GM13976 (cell line): ENCODE measurements at regions of chr22 and their contacts with region 1.

Region 1: DNA sequence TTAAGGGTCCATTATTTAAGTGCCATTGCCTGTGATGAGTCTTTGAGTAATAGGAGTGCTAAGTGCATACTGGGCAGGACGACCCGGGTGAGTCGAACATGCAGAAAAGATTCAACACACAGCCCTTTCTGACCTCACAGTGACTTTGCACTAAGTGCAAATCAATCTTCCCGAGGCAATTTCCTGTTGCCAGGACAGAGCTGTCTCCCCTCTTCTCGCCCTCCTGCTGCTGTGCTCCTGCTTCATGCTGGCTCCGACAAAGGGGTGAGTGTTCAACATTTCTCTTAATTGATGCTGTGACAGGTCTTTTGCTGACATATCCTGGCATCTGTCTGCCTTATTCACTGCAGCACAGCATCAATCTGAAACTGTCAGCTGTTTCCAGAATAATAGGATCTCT is 42.0 kb downstream of the MCHR1 start:
- DNase-seq: no peak
- CTCF ChIP-seq: no peak

Region 2: GRCh38 chr22:40121461-40121860 is 599.8 kb before region 1 on chr22:
- in situ Hi-C with region 1: no loop called
- DNase-seq: no peak
- CTCF ChIP-seq: no peak

Region 3: DNA sequence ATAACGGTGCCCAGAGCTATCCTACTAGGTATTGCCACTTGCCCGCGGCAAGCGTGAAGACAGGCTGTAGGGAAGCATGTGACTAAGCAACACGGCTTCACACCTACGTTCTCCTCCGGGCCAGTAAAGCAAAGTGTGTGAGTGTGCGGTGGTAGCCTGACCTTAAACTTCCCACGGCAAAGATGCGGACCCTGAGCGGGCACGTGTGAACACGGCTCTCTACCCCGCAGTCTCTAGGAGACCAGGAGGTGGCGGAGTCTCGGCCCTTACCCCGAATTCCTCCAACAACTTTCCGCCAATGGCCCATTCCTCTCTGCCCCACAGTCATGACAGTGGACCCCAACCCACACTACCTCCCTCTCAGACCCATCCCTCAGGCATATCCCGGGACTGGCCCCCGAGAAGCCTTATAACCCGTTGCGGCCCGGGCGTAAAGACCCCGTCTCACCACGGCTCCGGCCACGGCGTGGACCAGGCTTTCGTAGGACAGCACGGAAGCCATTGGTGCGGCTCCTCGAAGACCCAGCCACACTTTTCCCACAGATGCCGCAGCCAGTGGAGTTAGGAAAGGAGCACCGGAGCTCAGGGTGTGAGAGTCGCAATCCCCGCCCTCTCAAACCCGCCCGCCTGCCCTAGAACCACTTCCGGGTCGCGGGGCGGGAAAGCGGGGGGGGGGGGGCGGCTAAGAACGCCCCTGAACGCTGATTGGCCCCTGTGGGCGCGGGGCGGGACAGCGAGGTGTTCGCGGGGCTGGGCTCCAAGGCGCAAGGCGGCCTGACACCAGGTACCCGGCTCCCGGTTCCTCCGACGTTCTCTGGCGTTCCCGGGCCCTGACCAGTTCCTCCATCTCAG is 97.7 kb after region 1 on chr22 and contains the start of gene SLC25A17:
- in situ Hi-C with region 1: loop called (anchors 25 kb)
- DNase-seq: peak; percentile 98
- CTCF ChIP-seq: peak; percentile 14

Region 4: DNA sequence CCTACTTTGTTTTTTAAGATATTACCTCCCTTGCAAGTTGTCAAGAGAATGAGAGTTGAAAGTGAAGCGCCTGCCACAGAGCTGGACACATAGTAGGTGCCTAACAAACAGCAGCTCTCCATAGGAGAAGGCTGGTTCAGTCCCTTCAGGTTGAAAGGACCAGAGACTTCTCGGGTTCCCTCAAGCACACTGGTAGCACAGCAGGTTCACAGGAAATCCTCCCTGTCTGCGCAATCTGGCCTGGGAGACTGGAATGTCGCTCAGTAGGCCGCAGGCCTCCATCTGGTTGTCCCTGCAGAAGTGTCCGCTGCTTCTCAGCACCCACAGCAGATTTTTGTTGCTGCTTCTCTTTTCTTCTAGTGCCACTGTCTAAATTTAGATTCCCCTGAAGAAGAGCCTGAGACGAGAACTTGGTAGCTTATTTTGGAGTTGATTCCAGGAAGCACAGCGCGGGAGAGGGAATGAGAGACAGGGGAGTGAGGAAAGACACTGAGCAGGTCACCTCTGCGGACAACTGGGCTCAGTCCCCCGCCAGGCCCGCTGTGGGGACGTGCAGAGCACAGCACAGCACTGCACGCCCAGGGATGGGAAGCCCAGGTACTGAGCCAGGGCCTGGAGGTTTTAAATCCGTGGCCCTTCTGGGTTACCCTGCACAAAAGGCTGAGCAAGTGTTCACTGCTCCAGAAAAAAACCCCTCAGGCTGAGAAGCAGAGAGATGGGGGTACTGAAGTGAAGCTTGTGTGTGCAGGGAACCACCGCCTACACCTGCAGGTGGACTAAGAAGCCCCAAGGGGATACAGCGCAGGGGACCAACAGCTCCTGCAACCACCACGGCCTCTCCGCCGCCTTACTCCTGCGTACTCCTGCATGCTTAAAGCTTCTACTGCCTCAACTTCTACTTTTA is 261.5 kb after region 1 on chr22:
- in situ Hi-C with region 1: no loop called
- DNase-seq: peak; percentile 65
- CTCF ChIP-seq: no peak